ENCODE measurements at regions of chr9 and their contacts with region 1.

Region 1: GRCh38 chr9:94783102-94783664 is 56.7 kb downstream of the AOPEP start:
- DNase-seq: peak; percentile 88
- H3K4me3 ChIP-seq: no peak overlapping the region
- H3K27ac ChIP-seq: no peak overlapping the region
- H3K4me1 ChIP-seq: peaks cover 12% of the 10 kb centered on the region
- H3K27me3 ChIP-seq: no peaks in the 10 kb centered on the region
- CTCF ChIP-seq: peak; percentile 86

Region 2: DNA sequence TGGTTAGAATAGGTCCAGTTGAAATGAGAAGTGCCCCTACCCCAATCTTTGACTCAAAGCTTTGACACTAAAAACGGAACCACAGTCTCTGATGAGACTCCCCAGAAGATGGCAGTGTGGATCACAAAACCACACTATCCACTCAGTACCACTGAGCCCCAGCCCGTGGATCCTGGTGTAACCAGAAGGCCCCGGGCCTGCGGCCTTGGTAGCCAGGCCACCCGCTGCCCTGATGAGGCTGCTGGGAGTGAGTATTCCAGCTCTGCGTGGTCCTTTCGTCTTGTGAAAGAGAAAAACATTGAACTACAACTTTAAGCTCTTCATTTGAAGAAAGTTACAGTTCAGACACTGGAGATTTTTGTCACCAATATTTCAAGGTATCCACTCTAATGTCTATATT is 101.7 kb before region 1 on chr9:
- CTCF ChIA-PET with region 1: no interaction called
- POLR2A ChIA-PET with region 1: no interaction called
- intact Hi-C with region 1: loop called (anchors 5 kb)
- DNase-seq: peak; percentile 77
- H3K4me3 ChIP-seq: no peak overlapping the region
- H3K27ac ChIP-seq: no peak overlapping the region
- H3K4me1 ChIP-seq: no peaks in the 10 kb centered on the region
- H3K27me3 ChIP-seq: no peaks in the 10 kb centered on the region
- CTCF ChIP-seq: peak; percentile 81

Region 3: GRCh38 chr9:94855903-94856302 is 72.7 kb after region 1 on chr9:
- CTCF ChIA-PET with region 1: no interaction called
- POLR2A ChIA-PET with region 1: interaction called, 14 read pairs
- intact Hi-C with region 1: no loop called
- DNase-seq: no peak
- H3K4me3 ChIP-seq: no peak overlapping the region
- H3K27ac ChIP-seq: no peak overlapping the region
- H3K4me1 ChIP-seq: no peaks in the 10 kb centered on the region
- H3K27me3 ChIP-seq: no peaks in the 10 kb centered on the region
- CTCF ChIP-seq: no peak

Region 4: GRCh38 chr9:95004411-95005277 is 221.5 kb after region 1 on chr9:
- CTCF ChIA-PET with region 1: no interaction called
- POLR2A ChIA-PET with region 1: no interaction called
- intact Hi-C with region 1: loop called (anchors 10 kb)
- DNase-seq: peak; percentile 59
- H3K4me3 ChIP-seq: peak overlapping the region; percentile 78
- H3K27ac ChIP-seq: peak overlapping the region; percentile 77
- H3K4me1 ChIP-seq: peaks cover 16% of the 10 kb centered on the region
- H3K27me3 ChIP-seq: no peaks in the 10 kb centered on the region
- CTCF ChIP-seq: no peak

Region 5: DNA sequence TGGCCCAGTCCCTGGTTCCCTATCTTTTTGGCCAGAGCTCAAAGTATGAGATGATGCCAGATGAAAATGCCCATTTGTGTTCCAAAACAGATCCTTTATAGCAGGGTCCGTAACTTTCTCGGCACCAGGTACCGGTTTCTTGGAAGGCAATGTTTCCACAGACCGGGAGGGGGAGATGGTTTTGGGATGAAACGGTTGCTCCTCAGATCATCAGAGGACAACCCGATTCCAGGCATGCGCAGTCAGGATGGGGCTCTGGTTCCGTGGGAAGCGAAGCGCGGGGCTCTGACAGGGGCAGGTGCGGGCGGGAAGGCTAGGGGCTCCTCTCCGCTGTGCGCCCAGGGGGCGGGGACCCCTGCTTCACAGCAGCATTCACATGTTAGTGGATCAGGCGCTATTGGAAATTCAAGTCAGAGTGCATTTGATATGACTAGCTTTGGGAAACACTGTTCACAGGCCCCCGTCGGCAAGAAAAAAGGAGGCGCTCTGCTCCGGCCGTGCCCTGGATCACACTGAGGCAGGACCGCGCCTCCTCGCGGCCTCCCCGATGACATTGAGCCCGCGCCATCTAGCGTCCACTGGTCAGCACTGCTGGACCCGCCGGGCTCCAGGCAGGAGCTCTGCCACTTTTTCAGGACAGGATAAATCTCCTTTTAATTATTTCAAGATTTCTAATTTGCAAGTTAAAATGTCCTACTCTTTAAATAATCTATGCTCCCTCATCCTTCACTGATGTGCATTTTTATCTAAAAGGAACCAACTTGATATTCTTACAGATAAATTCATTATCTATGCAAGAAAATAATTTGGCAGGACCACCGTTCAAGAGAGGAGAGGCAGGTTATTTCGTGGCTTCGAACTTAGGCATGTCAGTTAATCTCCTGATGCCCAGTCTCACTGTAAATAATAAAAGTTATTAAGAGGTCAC is 344.3 kb after region 1 on chr9:
- CTCF ChIA-PET with region 1: interaction called, 7 read pairs
- POLR2A ChIA-PET with region 1: no interaction called
- intact Hi-C with region 1: loop called (anchors 1 kb)
- DNase-seq: peak; percentile 82
- H3K4me3 ChIP-seq: no peak overlapping the region
- H3K27ac ChIP-seq: no peak overlapping the region
- H3K4me1 ChIP-seq: peaks cover 5% of the 10 kb centered on the region
- H3K27me3 ChIP-seq: no peaks in the 10 kb centered on the region
- CTCF ChIP-seq: peak; percentile 99

Region 6: DNA sequence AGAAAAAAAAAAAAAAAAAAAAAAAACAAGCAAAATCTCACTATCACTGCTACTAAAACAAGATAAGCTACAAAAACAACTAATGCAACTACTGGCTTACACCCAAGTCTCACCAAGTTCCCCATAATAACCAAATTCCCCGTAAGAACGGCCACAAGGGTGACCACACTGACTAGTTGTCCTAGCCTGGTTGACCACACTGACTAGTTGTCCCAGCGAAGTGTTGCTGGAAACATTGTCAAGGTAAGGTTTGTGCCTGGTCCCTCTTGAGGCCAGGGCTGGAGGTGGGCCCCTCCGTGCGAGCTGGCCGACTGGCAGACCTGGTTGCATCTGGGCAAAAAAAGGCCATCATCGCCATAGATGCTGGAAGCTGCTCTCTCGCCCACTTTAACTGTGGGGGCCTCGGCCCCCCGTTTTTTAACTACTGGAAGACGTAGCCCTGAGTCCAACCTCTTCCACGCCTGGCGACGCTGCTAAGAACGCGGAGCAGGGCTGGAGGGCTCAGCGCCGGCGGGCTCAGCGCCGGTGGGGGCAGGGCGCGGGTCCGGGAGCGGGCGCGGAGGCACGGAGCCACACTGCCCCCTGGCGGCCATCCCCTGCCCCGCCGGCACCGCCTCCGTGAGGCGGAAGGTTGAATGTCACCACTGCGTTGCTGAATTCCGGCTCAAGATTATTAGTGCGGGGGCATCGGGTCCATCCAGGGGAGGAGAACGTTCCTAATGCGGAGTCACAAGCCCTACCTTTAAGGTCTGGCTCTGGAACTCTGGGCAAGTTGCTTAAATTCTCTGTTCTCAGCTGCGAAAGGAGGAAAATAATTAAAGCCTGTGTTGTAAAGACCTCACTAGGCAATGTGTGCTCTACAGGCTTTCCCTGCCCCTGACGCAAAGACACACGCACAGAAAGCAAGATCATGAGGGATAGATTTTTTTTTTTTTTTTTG is 1434.8 kb after region 1 on chr9:
- CTCF ChIA-PET with region 1: no interaction called
- POLR2A ChIA-PET with region 1: no interaction called
- intact Hi-C with region 1: loop called (anchors 5 kb)
- DNase-seq: peak; percentile 77
- H3K4me3 ChIP-seq: peak overlapping the region; percentile 23
- H3K27ac ChIP-seq: no peak overlapping the region
- H3K4me1 ChIP-seq: no peaks in the 10 kb centered on the region
- H3K27me3 ChIP-seq: peaks cover 4% of the 10 kb centered on the region
- CTCF ChIP-seq: peak; percentile 89

Measured in A673 (cell line).